ENCODE measurements at regions of chr20 and their contacts with region 1.

Region 1: GRCh38 chr20:50815162-50815989 is 20.5 kb downstream of the BCAS4 start:
- DNase-seq: peak in 3 of 10 donors; percentile 26 to 29 (median 27)
- ATAC-seq: peak; percentile 35 to 40
- H3K4me3 Mint-ChIP-seq: peak overlapping the region; percentile 63 to 90 (median 84)
- H3K27ac Mint-ChIP-seq: peak overlapping the region; percentile 84 to 100 (median 95)
- H3K4me1 Mint-ChIP-seq: peaks cover 36 to 84% (median 79%) of the 10 kb centered on the region in 4 donors
- H3K27me3 Mint-ChIP-seq: peaks cover 0 to 2% (median 0%) of the 10 kb centered on the region in 5 donors

Region 2: DNA sequence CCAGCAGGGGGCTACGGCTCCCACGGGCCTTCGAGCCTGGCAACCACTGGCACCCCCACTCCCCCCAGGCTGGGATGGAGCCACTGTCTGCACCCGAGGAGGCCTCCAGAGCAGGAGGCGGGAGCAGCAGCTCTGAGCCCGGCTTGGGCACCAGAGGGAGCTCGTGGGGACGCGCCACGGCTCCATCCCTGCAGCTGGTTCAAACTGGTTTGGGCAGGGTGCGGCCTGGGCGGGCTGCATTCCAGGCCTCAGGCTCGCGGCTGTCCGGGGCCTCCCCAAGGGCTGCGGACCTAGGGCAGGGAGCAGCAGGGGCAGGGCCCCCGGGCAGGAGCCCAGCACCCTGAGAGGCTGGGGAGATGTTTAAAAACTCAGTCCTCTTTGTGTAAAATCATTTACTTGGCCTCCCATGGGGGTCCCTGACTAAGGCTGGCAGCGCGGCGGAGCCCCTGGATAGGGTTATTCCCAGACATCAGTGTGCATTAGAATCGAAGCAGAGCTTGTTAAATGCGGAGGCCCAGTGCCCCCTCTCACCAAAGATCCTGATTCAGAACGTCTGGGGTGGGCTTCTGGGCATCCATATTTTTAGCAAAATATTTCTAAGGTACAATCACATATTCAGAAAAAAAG is 24.6 kb before region 1 on chr20:
- POLR2A ChIA-PET with region 1: interaction called, 160 read pairs
- DNase-seq: peak; percentile 58 to 85 (median 74)
- ATAC-seq: peak; percentile 62 to 67
- H3K4me3 Mint-ChIP-seq: peak overlapping the region in 5 of 10 donors; percentile 10 to 51 (median 37)
- H3K27ac Mint-ChIP-seq: peak overlapping the region; percentile 66 to 93 (median 86)
- H3K4me1 Mint-ChIP-seq: peaks cover 0 to 19% (median 10%) of the 10 kb centered on the region in 4 donors
- H3K27me3 Mint-ChIP-seq: no peaks in the 10 kb centered on the region

Region 3: GRCh38 chr20:50799890-50800655 is 15.3 kb before region 1 on chr20:
- POLR2A ChIA-PET with region 1: interaction called, 160 read pairs
- DNase-seq: no peak
- ATAC-seq: no peak
- H3K4me3 Mint-ChIP-seq: peak overlapping the region in 4 of 10 donors; percentile 3 to 46 (median 23)
- H3K27ac Mint-ChIP-seq: peak overlapping the region; percentile 22 to 88 (median 80)
- H3K4me1 Mint-ChIP-seq: peaks cover 25 to 66% (median 50%) of the 10 kb centered on the region in 4 donors
- H3K27me3 Mint-ChIP-seq: no peaks in the 10 kb centered on the region

Region 4: GRCh38 chr20:50805065-50805705 is 10.2 kb before region 1 on chr20:
- POLR2A ChIA-PET with region 1: interaction called, 13 read pairs
- DNase-seq: no peak
- ATAC-seq: peak; percentile 56 to 59
- H3K4me3 Mint-ChIP-seq: peak overlapping the region; percentile 55 to 87 (median 72)
- H3K27ac Mint-ChIP-seq: peak overlapping the region; percentile 91 to 96 (median 94)
- H3K4me1 Mint-ChIP-seq: peaks cover 25 to 70% (median 58%) of the 10 kb centered on the region in 4 donors
- H3K27me3 Mint-ChIP-seq: no peaks in the 10 kb centered on the region

Measured in naive thymus-derived CD8-positive, alpha-beta T cell (primary cell).